PC-3 (cell line): ENCODE measurements at regions of chr7 and their contacts with region 1.

Region 1: GRCh38 chr7:152675759-152676636 is at the start of gene XRCC2:
- DNase-seq: peak; percentile 89
- ATAC-seq: peak; percentile 93
- H3K4me3 ChIP-seq: peak within 1 kb of the TSS; percentile 92
- H3K27ac ChIP-seq: peak within 1 kb of the TSS; percentile 59
- H3K4me1 ChIP-seq: peaks cover 7% of the 10 kb centered on the region
- H3K27me3 ChIP-seq: no peaks in the 10 kb centered on the region
- CTCF ChIP-seq: no peak
- total RNA-seq, gene XRCC2: 13.6 and 18.7 TPM in 2 replicates

Region 2: DNA sequence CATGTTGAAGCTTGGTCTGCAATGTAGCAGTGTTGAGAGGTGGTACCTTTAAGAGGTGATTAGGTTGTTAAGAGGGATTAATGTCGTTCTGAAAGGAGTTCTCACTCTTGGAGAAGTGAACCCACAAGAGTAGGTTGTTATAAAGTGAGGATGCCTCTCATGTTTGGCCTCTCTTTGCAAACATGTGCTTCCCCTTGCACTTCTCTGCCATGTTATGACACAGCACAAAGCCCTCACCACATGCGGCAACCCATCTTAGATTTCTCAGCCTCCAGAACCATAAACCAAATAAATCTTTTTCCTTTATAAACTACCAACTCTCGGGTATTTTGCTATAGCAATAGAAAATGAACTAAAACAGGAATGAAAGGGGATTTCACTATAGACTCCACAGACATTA is 306.5 kb before region 1 on chr7:
- CTCF ChIA-PET with region 1: no interaction called
- POLR2A ChIA-PET with region 1: no interaction called
- intact Hi-C with region 1: no loop called
- DNase-seq: no peak
- ATAC-seq: no peak
- H3K4me3 ChIP-seq: no peak overlapping the region
- H3K27ac ChIP-seq: no peak overlapping the region
- H3K4me1 ChIP-seq: no peaks in the 10 kb centered on the region
- H3K27me3 ChIP-seq: no peaks in the 10 kb centered on the region
- CTCF ChIP-seq: no peak

Region 3: DNA sequence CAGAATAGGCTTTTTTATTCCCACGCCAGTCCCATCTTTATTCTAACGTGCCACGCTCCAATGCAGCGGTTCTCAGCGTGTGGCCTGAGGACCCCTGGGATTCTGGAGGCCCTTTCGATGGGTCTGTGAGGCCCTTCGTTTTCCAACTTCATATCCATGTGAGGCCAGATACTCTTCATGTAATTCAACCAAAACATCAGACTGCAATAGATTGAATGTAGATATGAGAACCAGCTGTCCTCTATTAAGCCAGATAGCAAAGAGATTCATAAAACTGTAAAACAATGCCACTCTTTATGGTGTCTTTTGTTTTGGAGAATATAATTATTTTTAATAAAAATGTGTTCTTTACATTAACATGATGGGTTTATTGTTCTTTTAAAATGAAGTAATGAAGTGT is 187.0 kb before region 1 on chr7:
- CTCF ChIA-PET with region 1: no interaction called
- POLR2A ChIA-PET with region 1: no interaction called
- intact Hi-C with region 1: no loop called
- DNase-seq: no peak
- ATAC-seq: no peak
- H3K4me3 ChIP-seq: no peak overlapping the region
- H3K27ac ChIP-seq: no peak overlapping the region
- H3K4me1 ChIP-seq: no peaks in the 10 kb centered on the region
- H3K27me3 ChIP-seq: no peaks in the 10 kb centered on the region
- CTCF ChIP-seq: no peak

Region 4: GRCh38 chr7:152574892-152575640 is 100.9 kb before region 1 on chr7:
- CTCF ChIA-PET with region 1: no interaction called
- POLR2A ChIA-PET with region 1: no interaction called
- intact Hi-C with region 1: no loop called
- DNase-seq: no peak
- ATAC-seq: no peak
- H3K4me3 ChIP-seq: no peak overlapping the region
- H3K27ac ChIP-seq: no peak overlapping the region
- H3K4me1 ChIP-seq: no peaks in the 10 kb centered on the region
- H3K27me3 ChIP-seq: no peaks in the 10 kb centered on the region
- CTCF ChIP-seq: no peak

Region 5: GRCh38 chr7:152699121-152699660 is 23.2 kb after region 1 on chr7:
- CTCF ChIA-PET with region 1: no interaction called
- POLR2A ChIA-PET with region 1: interaction called, 29 read pairs
- intact Hi-C with region 1: no loop called
- DNase-seq: no peak
- ATAC-seq: no peak
- H3K4me3 ChIP-seq: no peak overlapping the region
- H3K27ac ChIP-seq: no peak overlapping the region
- H3K4me1 ChIP-seq: no peaks in the 10 kb centered on the region
- H3K27me3 ChIP-seq: no peaks in the 10 kb centered on the region
- CTCF ChIP-seq: no peak

Region 6: GRCh38 chr7:152759949-152760853 is 84.2 kb after region 1 on chr7:
- CTCF ChIA-PET with region 1: no interaction called
- POLR2A ChIA-PET with region 1: interaction called, 4 read pairs
- intact Hi-C with region 1: loop called (anchors 5 kb)
- DNase-seq: peak; percentile 25
- ATAC-seq: peak; percentile 54
- H3K4me3 ChIP-seq: peak overlapping the region; percentile 90
- H3K27ac ChIP-seq: peak overlapping the region; percentile 90
- H3K4me1 ChIP-seq: peaks cover 14% of the 10 kb centered on the region
- H3K27me3 ChIP-seq: no peaks in the 10 kb centered on the region
- CTCF ChIP-seq: no peak

Region 7: GRCh38 chr7:152882576-152883310 is 206.7 kb after region 1 on chr7:
- CTCF ChIA-PET with region 1: no interaction called
- POLR2A ChIA-PET with region 1: no interaction called
- intact Hi-C with region 1: no loop called
- DNase-seq: no peak
- ATAC-seq: no peak
- H3K4me3 ChIP-seq: no peak overlapping the region
- H3K27ac ChIP-seq: no peak overlapping the region
- H3K4me1 ChIP-seq: no peaks in the 10 kb centered on the region
- H3K27me3 ChIP-seq: no peaks in the 10 kb centered on the region
- CTCF ChIP-seq: no peak